HEK293 (cell line): ENCODE measurements at regions of chr10 and their contacts with region 1.

Region 1: GRCh38 chr10:96129387-96130325 is at the start of gene ZNF518A:
- H3K4me3 ChIP-seq: peak within 1 kb of the TSS; percentile 76
- H3K27ac ChIP-seq: peak within 1 kb of the TSS; percentile 92
- H3K4me1 ChIP-seq: no peaks in the 10 kb centered on the region
- CTCF ChIP-seq: peak; percentile 50; the same call in 1 of the 2 replicates

Region 2: DNA sequence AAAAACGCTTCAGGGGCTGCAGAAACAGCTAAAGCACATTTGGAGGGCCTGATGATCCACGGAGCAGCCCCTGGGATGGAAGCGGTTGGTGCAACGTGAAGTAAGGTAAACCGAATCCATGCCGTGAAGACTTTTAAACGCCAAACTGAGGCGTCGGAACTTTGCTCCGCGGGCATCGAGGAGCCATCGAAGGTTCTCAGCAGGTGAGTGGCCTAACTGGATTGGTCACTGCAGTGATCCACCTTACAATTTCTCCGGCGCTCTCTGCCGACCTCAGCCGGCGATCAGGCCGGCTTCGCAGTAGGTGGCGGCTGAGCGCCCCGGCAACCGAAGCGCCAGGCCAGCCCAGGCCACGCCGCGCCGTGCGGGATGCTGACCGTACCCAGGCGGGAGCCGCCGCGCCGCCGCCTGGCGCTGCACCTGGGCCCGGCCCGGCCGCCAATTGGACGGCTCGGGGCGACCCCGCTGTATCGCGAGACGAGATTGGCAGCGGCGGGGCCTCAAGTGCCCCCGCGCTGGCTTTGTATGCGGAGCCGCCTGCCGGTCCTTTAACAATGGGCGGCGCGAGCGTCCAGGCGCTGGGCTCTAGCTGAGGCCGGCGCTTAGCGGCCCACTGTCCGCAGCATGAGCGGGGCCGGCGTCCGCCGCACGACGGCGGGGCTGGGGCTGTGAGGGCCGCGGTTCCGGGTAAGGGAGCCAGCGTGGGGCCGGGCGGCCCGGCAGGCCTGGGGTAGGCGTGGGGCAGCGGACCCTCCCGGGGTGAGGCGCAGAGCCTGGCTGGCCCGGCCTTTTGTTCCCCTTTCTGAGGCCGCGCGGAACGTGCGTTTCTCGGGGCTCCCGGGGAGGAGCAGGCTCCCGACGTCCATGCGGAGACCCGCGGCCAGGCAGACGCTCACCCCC is 86.4 kb before region 1 on chr10 and contains the start of gene CCNJ:
- CTCF ChIA-PET with region 1: no interaction called
- POLR2A ChIA-PET with region 1: interaction called, 18 read pairs
- H3K4me3 ChIP-seq: peak within 1 kb of the TSS; percentile 65
- H3K27ac ChIP-seq: peak within 1 kb of the TSS; percentile 84
- H3K4me1 ChIP-seq: peaks cover 10% of the 10 kb centered on the region
- CTCF ChIP-seq: peak; percentile 21

Region 3: GRCh38 chr10:96089670-96090462 is 39.8 kb before region 1 on chr10:
- CTCF ChIA-PET with region 1: interaction called, 4 read pairs
- POLR2A ChIA-PET with region 1: interaction called, 121 read pairs
- H3K4me3 ChIP-seq: peak overlapping the region; percentile 82
- H3K27ac ChIP-seq: peak overlapping the region; percentile 87
- H3K4me1 ChIP-seq: no peaks in the 10 kb centered on the region
- CTCF ChIP-seq: peak; percentile 37; the same call in 1 of the 2 replicates

Region 4: DNA sequence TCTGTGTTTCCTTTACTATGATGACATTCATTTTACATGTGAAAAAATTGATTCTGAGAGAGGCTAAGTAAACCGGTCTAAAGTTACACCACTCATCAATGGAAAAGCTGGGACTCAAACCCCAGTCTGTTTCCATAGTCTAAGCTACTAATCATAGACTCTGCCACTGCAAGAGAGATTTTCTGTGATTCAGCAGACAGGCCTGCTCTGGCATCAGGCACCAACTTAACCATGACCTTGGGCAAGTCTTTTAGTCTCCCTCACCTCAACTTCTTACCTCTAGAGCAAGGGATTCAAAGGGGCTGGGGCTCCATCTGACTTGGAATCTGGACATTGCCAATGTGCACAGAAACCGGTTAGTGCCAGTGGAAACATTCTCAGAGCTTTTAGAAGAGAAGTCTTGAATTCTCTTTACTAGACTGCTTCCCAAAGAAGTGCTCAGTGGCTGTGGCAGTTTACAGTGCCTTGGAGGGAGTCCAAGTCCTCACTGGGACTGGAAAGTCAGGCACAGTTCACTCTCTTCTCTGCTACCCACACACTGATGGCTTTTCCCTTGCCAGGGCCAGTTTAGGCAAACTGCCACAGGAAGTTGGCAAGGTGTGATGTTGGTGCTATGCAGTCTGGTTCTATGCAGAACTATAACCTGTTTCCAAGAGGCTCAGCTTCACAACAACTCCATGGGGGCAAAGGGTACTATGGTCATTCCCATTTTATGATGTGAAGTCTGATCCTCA is 146.2 kb after region 1 on chr10:
- CTCF ChIA-PET with region 1: no interaction called
- POLR2A ChIA-PET with region 1: no interaction called
- H3K4me3 ChIP-seq: no peak overlapping the region
- H3K27ac ChIP-seq: no peak overlapping the region
- H3K4me1 ChIP-seq: no peaks in the 10 kb centered on the region
- CTCF ChIP-seq: no peak